Endothelial cell of umbilical vein (primary cell): ENCODE measurements at regions of chr14 and their contacts with region 1.

Region 1: GRCh38 chr14:81453166-81453766 is 53.1 kb upstream of the STON2 start:
- DNase-seq: peak; percentile 48
- H3K4me3 ChIP-seq: no peak overlapping the region
- H3K27ac ChIP-seq: no peak overlapping the region
- H3K4me1 ChIP-seq: no peaks in the 10 kb centered on the region
- H3K27me3 ChIP-seq: peaks cover 2 to 9% of the 10 kb centered on the region in 2 experiments
- CTCF ChIP-seq: peak; percentile 69 to 73
- POLR2A ChIP-seq: no peak

Region 2: DNA sequence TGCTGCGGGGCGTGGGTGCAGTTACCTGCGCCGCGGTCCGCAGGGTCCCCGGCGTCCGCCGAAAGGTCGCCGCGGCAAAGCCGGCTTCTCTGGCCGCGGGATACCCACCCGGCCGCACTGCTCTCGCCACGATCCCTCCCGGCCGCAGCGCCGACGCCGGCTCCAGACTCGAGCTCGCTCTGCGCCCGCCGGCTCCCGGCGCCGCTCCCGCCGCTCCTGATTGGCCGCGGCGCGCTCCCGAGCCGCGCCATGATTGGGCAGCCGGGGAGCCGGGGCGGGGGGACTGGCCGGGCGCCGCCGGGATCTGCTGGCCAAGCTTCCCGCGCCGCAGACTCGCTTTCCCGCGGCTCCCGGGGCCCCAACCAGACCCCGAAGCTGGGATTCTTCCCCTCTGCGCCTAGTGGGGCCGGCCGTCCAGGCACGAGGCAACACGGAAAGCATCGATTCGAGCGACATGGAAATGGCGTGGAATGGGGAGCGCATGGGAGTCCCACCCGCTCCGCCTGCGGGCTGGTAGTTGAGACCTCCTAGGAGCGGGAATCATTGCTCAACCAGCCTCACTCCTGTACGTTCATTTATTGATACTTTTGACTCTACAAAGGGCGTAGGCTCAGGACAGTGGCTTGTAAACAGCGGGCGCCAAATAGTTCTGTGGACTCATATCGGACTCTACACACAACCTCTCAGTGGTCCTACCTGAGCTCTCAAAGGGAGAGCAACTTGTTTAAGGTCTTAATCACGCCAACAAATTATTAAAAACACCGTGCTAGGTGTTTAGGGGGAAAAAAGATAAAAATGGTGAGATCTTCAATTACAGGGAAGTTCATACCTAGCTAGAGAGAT is 16.7 kb before region 1 on chr14:
- CTCF ChIA-PET with region 1: interaction called, 14 read pairs
- POLR2A ChIA-PET with region 1: no interaction called
- dilution Hi-C with region 1: no loop called
- intact Hi-C with region 1: no loop called
- DNase-seq: peak; percentile 56
- H3K4me3 ChIP-seq: peak overlapping the region in 2 of 3 experiments; percentile 23 to 28
- H3K27ac ChIP-seq: no peak overlapping the region
- H3K4me1 ChIP-seq: peaks cover 5% of the 10 kb centered on the region
- H3K27me3 ChIP-seq: peaks cover 34 to 36% of the 10 kb centered on the region in 2 experiments
- CTCF ChIP-seq: no peak
- POLR2A ChIP-seq: no peak